MCF 10A (cell line): ENCODE measurements at regions of chr2 and their contacts with region 1.

Region 1: DNA sequence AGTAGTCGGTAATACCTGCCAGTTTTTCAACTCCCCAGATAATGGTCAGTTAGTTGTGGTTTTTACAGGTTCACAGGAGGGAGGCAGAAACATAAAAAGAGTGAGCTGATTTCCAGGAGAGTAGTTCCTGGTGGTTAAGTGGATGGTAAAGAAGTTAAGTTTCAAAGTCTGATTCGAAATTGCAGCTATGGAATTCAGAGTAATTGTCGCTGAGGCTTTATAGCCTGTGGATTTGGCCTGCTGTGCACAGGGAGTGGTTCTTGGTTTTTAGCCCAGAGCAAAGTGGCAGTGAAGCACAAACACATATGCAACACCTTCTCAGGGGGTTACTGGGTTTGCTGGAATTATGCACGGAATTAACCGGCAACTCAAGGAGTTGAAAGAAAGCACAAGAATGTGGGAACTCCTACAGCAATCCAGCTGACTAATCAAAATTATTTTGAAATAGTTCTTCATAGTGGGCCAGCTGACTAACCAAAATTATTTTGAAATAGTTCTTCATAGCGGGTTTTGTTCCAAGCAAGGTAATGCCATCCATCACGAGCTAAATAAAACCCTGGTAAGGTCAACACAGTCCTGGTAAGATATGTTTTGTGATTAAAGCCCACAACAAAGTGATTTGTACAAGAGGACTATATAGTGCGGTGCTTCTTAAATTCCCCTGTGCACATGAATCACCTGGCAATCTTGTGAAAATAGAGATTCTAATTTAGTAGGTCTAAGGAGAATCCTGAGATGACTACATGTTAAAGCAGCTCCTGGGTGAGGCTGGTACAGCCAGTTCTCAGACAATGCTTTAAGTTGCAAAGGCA is 94.4 kb downstream of the SGPP2 start:
- DNase-seq: peak; percentile 96
- H3K4me3 Mint-ChIP-seq: peak overlapping the region; percentile 25
- H3K27ac Mint-ChIP-seq: peak overlapping the region; percentile 82
- H3K4me1 Mint-ChIP-seq: peaks cover 47% of the 10 kb centered on the region
- H3K27me3 Mint-ChIP-seq: no peaks in the 10 kb centered on the region
- CTCF ChIP-seq: no peak

Region 2: DNA sequence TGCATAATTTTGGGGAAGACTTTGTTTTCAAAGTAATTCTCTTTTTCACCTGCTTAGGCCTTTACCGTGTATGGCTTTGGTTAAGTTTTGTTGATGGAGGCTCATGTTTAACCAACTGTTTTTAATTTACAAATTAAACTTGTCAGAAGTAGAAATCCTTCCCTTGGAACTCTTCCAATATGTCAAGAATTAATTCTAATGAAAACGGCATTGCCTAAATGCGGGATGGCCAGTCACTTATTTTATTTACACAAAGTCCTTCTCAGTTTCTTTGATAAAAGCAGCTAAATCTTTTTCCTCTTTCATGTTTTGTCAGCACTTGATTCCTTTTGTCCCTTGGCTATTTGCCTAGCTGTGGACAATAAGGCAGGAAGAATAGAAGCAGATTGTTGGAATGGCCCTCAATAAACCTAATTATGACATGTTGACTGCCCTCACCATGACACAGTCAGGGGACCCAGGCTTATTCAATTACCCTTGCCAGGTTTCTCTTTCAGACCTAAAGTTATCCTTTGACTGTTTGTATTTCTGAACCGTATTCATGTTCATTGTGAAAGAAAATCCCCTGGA is 246.2 kb before region 1 on chr2:
- CTCF ChIA-PET with region 1: no interaction called
- POLR2A ChIA-PET with region 1: no interaction called
- intact Hi-C with region 1: no loop called
- DNase-seq: no peak
- H3K4me3 Mint-ChIP-seq: no peak overlapping the region
- H3K27ac Mint-ChIP-seq: no peak overlapping the region
- H3K4me1 Mint-ChIP-seq: no peaks in the 10 kb centered on the region
- H3K27me3 Mint-ChIP-seq: peaks cover 99% of the 10 kb centered on the region
- CTCF ChIP-seq: no peak

Region 3: GRCh38 chr2:222445226-222445625 is 73.5 kb before region 1 on chr2:
- CTCF ChIA-PET with region 1: interaction called, 5 read pairs
- POLR2A ChIA-PET with region 1: interaction called, 72 read pairs
- intact Hi-C with region 1: loop called (anchors 2 kb)
- DNase-seq: no peak
- H3K4me3 Mint-ChIP-seq: peak overlapping the region; percentile 31
- H3K27ac Mint-ChIP-seq: peak overlapping the region; percentile 73
- H3K4me1 Mint-ChIP-seq: peaks cover 74% of the 10 kb centered on the region
- H3K27me3 Mint-ChIP-seq: no peaks in the 10 kb centered on the region
- CTCF ChIP-seq: no peak

Region 4: GRCh38 chr2:222490131-222490530 is 28.6 kb before region 1 on chr2:
- CTCF ChIA-PET with region 1: no interaction called
- POLR2A ChIA-PET with region 1: interaction called, 12 read pairs
- intact Hi-C with region 1: no loop called
- DNase-seq: no peak
- H3K4me3 Mint-ChIP-seq: no peak overlapping the region
- H3K27ac Mint-ChIP-seq: no peak overlapping the region
- H3K4me1 Mint-ChIP-seq: no peaks in the 10 kb centered on the region
- H3K27me3 Mint-ChIP-seq: no peaks in the 10 kb centered on the region
- CTCF ChIP-seq: no peak

Region 5: GRCh38 chr2:222532315-222532714 is 13.5 kb after region 1 on chr2:
- CTCF ChIA-PET with region 1: no interaction called
- POLR2A ChIA-PET with region 1: interaction called, 13 read pairs
- intact Hi-C with region 1: no loop called
- DNase-seq: no peak
- H3K4me3 Mint-ChIP-seq: no peak overlapping the region
- H3K27ac Mint-ChIP-seq: no peak overlapping the region
- H3K4me1 Mint-ChIP-seq: no peaks in the 10 kb centered on the region
- H3K27me3 Mint-ChIP-seq: no peaks in the 10 kb centered on the region
- CTCF ChIP-seq: no peak

Region 6: GRCh38 chr2:222561817-222562645 is 43.3 kb after region 1 on chr2:
- CTCF ChIA-PET with region 1: interaction called, 4 read pairs
- POLR2A ChIA-PET with region 1: interaction called, 10 read pairs
- intact Hi-C with region 1: no loop called
- DNase-seq: peak; percentile 78
- H3K4me3 Mint-ChIP-seq: no peak overlapping the region
- H3K27ac Mint-ChIP-seq: no peak overlapping the region
- H3K4me1 Mint-ChIP-seq: peaks cover 7% of the 10 kb centered on the region
- H3K27me3 Mint-ChIP-seq: no peaks in the 10 kb centered on the region
- CTCF ChIP-seq: peak; percentile 72